Dorsolateral prefrontal cortex (tissue), 120 donors: ENCODE measurements at regions of chr5 and their contacts with region 1.

Region 1: DNA sequence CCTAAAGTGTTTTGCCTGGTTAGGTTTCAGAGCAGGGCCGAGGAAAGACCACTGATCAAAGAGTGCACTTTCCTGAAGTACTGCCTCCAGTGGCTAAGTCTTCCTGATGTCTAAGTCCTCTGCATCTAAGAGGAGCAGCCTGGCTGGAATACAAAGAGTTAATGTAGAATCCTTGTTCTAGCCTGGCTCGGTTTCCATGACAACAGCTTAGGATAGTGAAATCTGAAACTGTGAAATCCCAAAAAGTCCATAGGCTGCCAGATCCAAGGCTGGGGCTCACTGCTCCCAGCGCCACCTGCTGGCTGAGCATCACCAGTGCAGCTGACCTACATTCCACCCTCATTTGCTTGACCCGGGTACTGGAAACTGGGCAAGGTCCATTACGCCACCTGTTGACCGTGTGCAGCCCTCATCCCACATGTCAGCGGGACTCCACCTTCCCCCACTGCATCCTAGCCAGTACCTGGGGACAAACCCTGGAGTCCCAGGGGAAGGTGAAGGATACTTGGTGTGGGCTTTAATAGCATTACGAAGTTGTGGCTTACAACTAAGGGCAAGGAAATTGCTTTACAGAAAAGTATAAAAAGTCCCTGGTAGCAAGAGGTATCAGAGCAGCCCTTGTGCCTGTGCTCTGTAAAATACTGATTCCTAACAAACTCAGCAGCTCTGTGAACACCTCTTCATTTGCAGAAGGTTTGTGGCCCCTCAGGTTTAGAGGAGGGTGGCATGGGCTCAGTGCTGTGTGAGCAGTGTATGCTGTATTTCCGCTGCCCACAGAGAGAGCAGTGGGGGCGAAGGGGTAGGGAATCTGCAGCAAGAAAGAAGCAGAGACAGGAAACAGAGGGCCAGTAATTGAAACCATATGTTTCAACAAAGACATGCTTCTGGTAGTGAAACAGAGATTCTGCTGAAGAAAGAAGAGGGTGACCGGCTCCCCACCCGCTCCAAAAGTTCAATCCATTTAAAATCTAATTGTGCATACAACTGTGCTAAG is 36.0 kb downstream of the PCDHGC5 start:
- DNase-seq: peak; percentile 60 to 92 (median 83)
- H3K4me3 ChIP-seq: peak overlapping the region in 41 of 59 donors; percentile 1 to 47 (median 27)
- H3K27ac ChIP-seq: peak overlapping the region in 58 of 59 donors; percentile 8 to 96 (median 78)
- H3K27me3 ChIP-seq: peaks cover 0 to 9% (median 0%) of the 10 kb centered on the region in 45 donors
- CTCF ChIP-seq: peak in 55 of 56 donors; percentile 99 to 100 (median 100)

Region 2: GRCh38 chr5:141338538-141339306 is 186.2 kb before region 1 on chr5 and contains the start of gene PCDHGA2:
- intact Hi-C with region 1: no loop called
- DNase-seq: no peak
- H3K4me3 ChIP-seq: peak within 1 kb of the TSS in 20 of 59 donors; percentile 11 to 44 (median 21)
- H3K27ac ChIP-seq: no peak within 1 kb of the TSS
- H3K27me3 ChIP-seq: peaks cover 0 to 17% (median 0%) of the 10 kb centered on the region in 45 donors
- CTCF ChIP-seq: peak in 8 of 56 donors; percentile 6 to 34 (median 18)
- total RNA-seq, gene PCDHGA2: 3.3 to 13.0 (median 7.1) TPM

Region 3: GRCh38 chr5:141412854-141413539 is 111.9 kb before region 1 on chr5 and contains the start of gene PCDHGA10:
- intact Hi-C with region 1: loop called in 1 of 2 experiments (anchors 10 kb)
- DNase-seq: peak in 1 of 10 donors; percentile 37
- H3K4me3 ChIP-seq: peak within 1 kb of the TSS in 47 of 59 donors; percentile 1 to 55 (median 32)
- H3K27ac ChIP-seq: peak within 1 kb of the TSS in 2 of 59 donors; percentile 22 to 34
- H3K27me3 ChIP-seq: no peaks in the 10 kb centered on the region
- CTCF ChIP-seq: peak in 46 of 56 donors; percentile 11 to 55 (median 30)
- total RNA-seq, gene PCDHGA10: 5.8 to 20.1 (median 10.8) TPM

Region 4: GRCh38 chr5:141475625-141476131 is 49.2 kb before region 1 on chr5 and contains the start of gene PCDHGC3:
- intact Hi-C with region 1: loop called in 1 of 2 experiments (anchors 1 kb)
- DNase-seq: peak; percentile 68 to 93 (median 89)
- H3K4me3 ChIP-seq: peak within 1 kb of the TSS; percentile 35 to 85 (median 69)
- H3K27ac ChIP-seq: peak within 1 kb of the TSS in 56 of 59 donors; percentile 4 to 92 (median 78)
- H3K27me3 ChIP-seq: peaks cover 0 to 41% (median 0%) of the 10 kb centered on the region in 45 donors
- CTCF ChIP-seq: peak in 54 of 56 donors; percentile 7 to 77 (median 60)
- total RNA-seq, gene PCDHGC3: 96.7 to 415 (median 161) TPM

Region 5: GRCh38 chr5:141484641-141485311 is 40.1 kb before region 1 on chr5 and contains the start of gene PCDHGC4:
- intact Hi-C with region 1: loop called in 1 of 2 experiments (anchors 5 kb)
- DNase-seq: peak in 6 of 10 donors; percentile 70 to 82 (median 76)
- H3K4me3 ChIP-seq: peak within 1 kb of the TSS in 58 of 59 donors; percentile 20 to 71 (median 54)
- H3K27ac ChIP-seq: peak within 1 kb of the TSS in 53 of 59 donors; percentile 3 to 94 (median 67)
- H3K27me3 ChIP-seq: peaks cover 0 to 78% (median 0%) of the 10 kb centered on the region in 45 donors
- CTCF ChIP-seq: no peak
- total RNA-seq, gene PCDHGC4: 9.0 to 35.3 (median 19.4) TPM

Region 6: GRCh38 chr5:141492168-141492885 is 32.6 kb before region 1 on chr5:
- intact Hi-C with region 1: loop called (anchors 5 kb)
- DNase-seq: peak in 7 of 10 donors; percentile 19 to 75 (median 67)
- H3K4me3 ChIP-seq: peak overlapping the region; percentile 2 to 70 (median 55)
- H3K27ac ChIP-seq: peak overlapping the region in 56 of 59 donors; percentile 32 to 96 (median 87)
- H3K27me3 ChIP-seq: peaks cover 0 to 49% (median 0%) of the 10 kb centered on the region in 45 donors
- CTCF ChIP-seq: no peak

Region 7: GRCh38 chr5:141992349-141992963 is 467.6 kb after region 1 on chr5:
- intact Hi-C with region 1: no loop called
- DNase-seq: peak in 7 of 10 donors; percentile 54 to 92 (median 70)
- H3K4me3 ChIP-seq: no peak overlapping the region
- H3K27ac ChIP-seq: peak overlapping the region in 2 of 59 donors; percentile 15 to 60
- H3K27me3 ChIP-seq: no peaks in the 10 kb centered on the region
- CTCF ChIP-seq: peak; percentile 70 to 95 (median 87)

Region 8: GRCh38 chr5:142290577-142291299 is 765.8 kb after region 1 on chr5:
- intact Hi-C with region 1: no loop called
- DNase-seq: no peak
- H3K4me3 ChIP-seq: no peak overlapping the region
- H3K27ac ChIP-seq: no peak overlapping the region
- H3K27me3 ChIP-seq: no peaks in the 10 kb centered on the region
- CTCF ChIP-seq: no peak